Gastrocnemius medialis (tissue), 4 donors: ENCODE measurements at regions of chr10 and their contacts with region 1.

Region 1: GRCh38 chr10:22325272-22326144 is 4.6 kb downstream of the BMI1 start:
- DNase-seq: no peak
- ATAC-seq: no peak
- H3K4me3 ChIP-seq: peak overlapping the region; percentile 57 to 64 (median 64)
- H3K27ac ChIP-seq: peak overlapping the region; percentile 43 to 67 (median 60)
- H3K4me1 ChIP-seq: peaks cover 28 to 36% of the 10 kb centered on the region in 2 donors
- H3K27me3 ChIP-seq: peaks cover 10 to 25% (median 23%) of the 10 kb centered on the region in 3 donors
- CTCF ChIP-seq: no peak
- POLR2A ChIP-seq: no peak

Region 2: GRCh38 chr10:21525367-21526183 is 799.9 kb before region 1 on chr10 and contains the start of gene SKIDA1:
- in situ Hi-C with region 1: loop called in 2 of 4 experiments (anchors 10 to 25 kb)
- intact Hi-C with region 1: no loop called
- DNase-seq: peak; percentile 82 to 89
- ATAC-seq: peak; percentile 75 to 76
- H3K4me3 ChIP-seq: peak within 1 kb of the TSS; percentile 56 to 80 (median 74)
- H3K27ac ChIP-seq: peak within 1 kb of the TSS; percentile 90 to 100 (median 98)
- H3K4me1 ChIP-seq: peaks cover 25 to 32% of the 10 kb centered on the region in 2 donors
- H3K27me3 ChIP-seq: no peaks in the 10 kb centered on the region
- CTCF ChIP-seq: no peak
- POLR2A ChIP-seq: no peak
- total RNA-seq, gene SKIDA1: 0.09 TPM in 1 of 4 donors, not detected in the others

Region 3: DNA sequence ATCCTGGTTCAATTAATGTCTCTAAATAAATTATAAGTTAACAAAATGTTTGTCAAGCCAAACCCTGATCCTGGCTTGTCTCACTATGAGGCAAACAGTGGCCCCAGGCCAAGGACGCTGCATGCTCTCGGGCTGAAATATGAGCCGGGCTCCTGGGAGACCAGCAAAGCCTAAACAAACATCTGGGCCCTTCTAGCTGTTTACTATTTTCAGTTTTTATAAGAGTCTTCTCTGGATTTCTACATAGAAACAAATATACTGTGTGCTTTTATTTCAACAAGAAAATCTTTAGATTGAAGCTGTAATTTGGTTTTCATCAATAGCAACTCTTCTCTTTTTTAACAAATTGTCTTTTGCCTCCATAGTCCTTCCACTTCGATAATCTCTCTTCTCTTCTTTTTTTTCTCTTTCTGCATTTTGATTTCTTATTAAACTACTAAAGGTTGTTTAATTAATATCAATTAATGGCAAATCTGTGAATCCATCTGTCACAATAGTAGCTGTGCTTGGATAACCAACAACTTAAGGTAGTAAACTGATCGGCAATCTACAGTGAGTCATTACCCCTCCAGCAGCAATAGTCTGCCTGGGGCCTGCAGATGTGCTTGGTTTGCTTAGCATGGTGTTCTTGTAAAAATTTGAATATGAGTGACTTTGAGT is 238.6 kb before region 1 on chr10:
- in situ Hi-C with region 1: no loop called
- intact Hi-C with region 1: loop called (anchors 10 kb)
- DNase-seq: peak; percentile 85 to 86
- ATAC-seq: peak; percentile 99
- H3K4me3 ChIP-seq: peak overlapping the region in 3 of 4 donors; percentile 6 to 32 (median 12)
- H3K27ac ChIP-seq: peak overlapping the region; percentile 62 to 72 (median 70)
- H3K4me1 ChIP-seq: peaks cover 13 to 16% of the 10 kb centered on the region in 2 donors
- H3K27me3 ChIP-seq: no peaks in the 10 kb centered on the region
- CTCF ChIP-seq: no peak
- POLR2A ChIP-seq: no peak

Region 4: GRCh38 chr10:22414146-22414545 is 88.6 kb after region 1 on chr10:
- in situ Hi-C with region 1: no loop called
- intact Hi-C with region 1: no loop called
- DNase-seq: no peak
- ATAC-seq: no peak
- H3K4me3 ChIP-seq: no peak overlapping the region
- H3K27ac ChIP-seq: no peak overlapping the region
- H3K4me1 ChIP-seq: no peaks in the 10 kb centered on the region
- H3K27me3 ChIP-seq: no peaks in the 10 kb centered on the region
- CTCF ChIP-seq: no peak
- POLR2A ChIP-seq: no peak

Region 5: DNA sequence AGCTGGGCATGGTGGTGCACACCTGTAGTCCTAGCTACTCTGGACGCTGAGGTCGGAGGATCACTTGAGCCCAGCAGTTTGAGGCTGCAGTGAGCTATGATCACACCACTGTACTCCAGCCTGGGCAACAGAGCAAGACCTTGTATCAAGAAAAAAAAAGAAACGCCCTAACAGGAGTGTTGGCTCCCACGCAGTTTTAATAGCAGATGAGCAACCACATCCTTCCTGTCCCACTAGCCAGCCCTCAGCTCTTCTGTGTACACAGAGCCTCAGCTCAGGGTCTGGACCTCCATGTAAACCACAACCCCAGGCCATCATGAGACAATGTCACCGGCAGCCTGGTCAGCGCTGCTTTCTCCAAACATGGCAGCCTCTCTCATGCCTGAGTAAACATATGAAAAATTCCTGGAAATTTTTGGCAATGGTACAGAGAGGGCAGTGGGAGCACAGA is 280.7 kb after region 1 on chr10:
- in situ Hi-C with region 1: no loop called
- intact Hi-C with region 1: no loop called
- DNase-seq: peak in 1 of 2 donors; percentile 39
- ATAC-seq: no peak
- H3K4me3 ChIP-seq: no peak overlapping the region
- H3K27ac ChIP-seq: no peak overlapping the region
- H3K4me1 ChIP-seq: peaks cover 0 to 5% of the 10 kb centered on the region in 2 donors
- H3K27me3 ChIP-seq: no peaks in the 10 kb centered on the region
- CTCF ChIP-seq: no peak
- POLR2A ChIP-seq: no peak

Region 6: GRCh38 chr10:22714479-22715289 is 389.2 kb after region 1 on chr10 and contains the start of gene PIP4K2A:
- in situ Hi-C with region 1: no loop called
- intact Hi-C with region 1: loop called (anchors 10 kb)
- DNase-seq: peak; percentile 16 to 30
- ATAC-seq: peak; percentile 79 to 88
- H3K4me3 ChIP-seq: peak within 1 kb of the TSS; percentile 75 to 93 (median 80)
- H3K27ac ChIP-seq: peak within 1 kb of the TSS; percentile 63 to 72 (median 68)
- H3K4me1 ChIP-seq: peaks cover 0 to 16% of the 10 kb centered on the region in 2 donors
- H3K27me3 ChIP-seq: peaks cover 0 to 15% (median 9%) of the 10 kb centered on the region in 3 donors
- CTCF ChIP-seq: no peak
- POLR2A ChIP-seq: peak; percentile 30 to 37
- total RNA-seq, gene PIP4K2A: 3.9 to 7.5 (median 4.7) TPM